Activated CD4-positive, alpha-beta T cell treated with anti-CD3 and anti-CD28 coated beads, Interleukin-2, amount 10 ng/mL, durations not matched to agents 24 days and 14 days (primary cell): ENCODE measurements at regions of chr1 and their contacts with region 1.

Region 1: GRCh38 chr1:40241362-40241761 is 6.4 kb upstream of the TMCO2 start:
- DNase-seq: no peak
- H3K4me3 Mint-ChIP-seq: peak overlapping the region; percentile 54
- H3K27ac Mint-ChIP-seq: peak overlapping the region; percentile 87
- H3K4me1 Mint-ChIP-seq: peaks cover 57% of the 10 kb centered on the region
- H3K27me3 Mint-ChIP-seq: no peaks in the 10 kb centered on the region

Region 2: GRCh38 chr1:40224040-40224439 is 17.3 kb before region 1 on chr1:
- intact Hi-C with region 1: loop called (anchors 2 kb)
- DNase-seq: no peak
- H3K4me3 Mint-ChIP-seq: no peak overlapping the region
- H3K27ac Mint-ChIP-seq: peak overlapping the region; percentile 53
- H3K4me1 Mint-ChIP-seq: peaks cover 24% of the 10 kb centered on the region
- H3K27me3 Mint-ChIP-seq: no peaks in the 10 kb centered on the region

Region 3: DNA sequence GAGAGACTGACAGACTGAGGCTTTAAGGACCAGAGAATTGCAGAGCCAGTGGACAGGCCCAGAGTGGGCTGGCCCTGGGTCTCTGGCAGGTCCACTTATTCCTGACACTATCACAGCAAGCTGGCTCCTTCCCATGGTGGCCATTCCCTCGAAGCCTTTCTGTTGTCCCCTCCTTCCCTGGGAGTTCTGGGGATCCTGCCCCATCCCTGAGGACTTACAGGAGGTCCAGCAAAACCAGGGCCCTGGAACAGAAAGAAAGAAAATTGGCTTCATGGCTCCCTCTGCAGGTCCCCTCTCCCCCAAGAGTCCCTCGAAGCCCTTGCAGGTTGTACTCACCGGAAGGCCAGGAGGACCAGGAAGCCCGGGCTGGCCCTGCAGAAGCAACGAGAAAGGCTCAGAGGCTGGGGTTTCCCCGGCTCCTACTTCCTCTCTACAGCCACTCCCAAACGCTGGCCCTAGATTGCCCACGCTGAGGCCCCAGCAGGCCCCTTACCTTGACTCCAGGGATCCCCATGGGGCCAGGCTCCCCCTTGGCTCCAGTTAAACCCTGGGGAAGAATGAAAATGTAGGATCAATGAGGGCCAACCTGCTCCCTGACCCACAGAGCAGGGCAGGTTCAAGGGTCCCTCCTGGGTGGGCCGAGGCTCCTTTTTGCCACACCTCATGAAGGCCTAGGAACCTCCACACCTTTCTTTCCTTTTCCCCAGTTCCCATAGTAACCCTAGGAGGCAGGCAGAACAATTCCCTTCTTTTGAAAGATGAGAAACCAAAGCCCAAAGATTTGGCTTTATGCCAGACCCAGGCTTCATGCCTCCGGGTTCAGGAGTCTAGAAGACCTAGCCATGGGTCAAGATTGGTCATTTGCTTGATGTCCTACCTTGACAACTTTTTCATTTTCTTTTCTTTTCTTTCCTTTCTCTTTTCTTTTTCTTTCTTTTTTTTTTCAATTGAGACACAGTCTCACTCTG is 71.2 kb after region 1 on chr1:
- intact Hi-C with region 1: no loop called
- DNase-seq: peak; percentile 81
- H3K4me3 Mint-ChIP-seq: peak overlapping the region; percentile 57
- H3K27ac Mint-ChIP-seq: peak overlapping the region; percentile 66
- H3K4me1 Mint-ChIP-seq: peaks cover 32% of the 10 kb centered on the region
- H3K27me3 Mint-ChIP-seq: peaks cover 11% of the 10 kb centered on the region